ENCODE measurements at regions of chr6 and their contacts with region 1.

Region 1: DNA sequence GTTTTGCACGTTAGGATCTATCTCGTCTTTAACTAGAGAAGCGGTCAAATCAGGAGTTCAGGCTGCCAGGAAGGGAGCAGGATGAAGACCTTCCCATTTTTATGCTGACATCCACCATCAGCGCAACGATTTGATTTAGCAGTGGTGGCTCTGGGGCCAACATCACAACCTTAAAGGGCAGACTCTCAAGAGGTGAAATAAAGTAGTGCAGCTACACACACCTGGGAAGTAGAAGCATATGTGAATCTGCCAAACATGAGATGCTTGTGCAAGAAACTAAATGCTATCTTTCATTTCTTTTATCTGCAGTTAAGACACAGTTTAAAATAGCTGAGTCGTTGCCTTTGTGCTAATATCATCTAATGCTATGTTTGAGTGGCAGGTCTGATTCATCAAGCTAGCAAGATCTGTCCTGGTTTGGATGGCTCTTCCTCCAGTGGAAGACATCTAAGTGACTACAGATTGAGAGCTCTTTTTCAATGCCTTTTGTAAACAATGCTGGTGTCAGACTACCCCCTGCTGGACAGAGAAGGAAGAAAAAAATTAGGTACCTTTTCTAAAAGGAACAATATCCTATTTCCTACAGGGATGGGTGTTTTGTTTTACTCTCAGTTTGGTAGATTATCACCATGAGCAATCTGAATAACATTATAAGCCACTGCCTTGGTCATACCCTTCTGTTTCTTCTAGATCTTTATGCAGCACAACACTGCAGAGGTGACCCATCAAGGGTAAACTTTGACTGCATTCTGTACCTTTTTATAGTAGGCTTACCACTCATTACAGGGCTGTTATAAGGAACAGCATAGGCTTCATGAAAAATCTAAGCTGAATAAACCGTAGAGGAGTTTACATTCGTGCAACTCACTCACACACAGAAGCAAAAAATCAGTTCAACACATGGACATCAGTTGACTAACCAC is 171.6 kb upstream of the FBXL4 start:
- DNase-seq: peak in 6 of 14 experiments; percentile 2 to 46 (median 20)
- ATAC-seq: no peak
- H3K4me3 ChIP-seq: no peak overlapping the region
- H3K4me3 Mint-ChIP-seq: no peak overlapping the region
- H3K27ac ChIP-seq: no peak overlapping the region
- H3K27ac Mint-ChIP-seq: no peak overlapping the region
- H3K4me1 ChIP-seq: no peaks in the 10 kb centered on the region
- H3K4me1 Mint-ChIP-seq: no peaks in the 10 kb centered on the region
- H3K27me3 ChIP-seq: peaks cover 0 to 4% of the 10 kb centered on the region in 2 experiments
- H3K27me3 Mint-ChIP-seq: peaks cover 54% of the 10 kb centered on the region
- CTCF ChIP-seq: peak; percentile 63

Region 2: GRCh38 chr6:97186416-97186999 is 1932.9 kb before region 1 on chr6:
- CTCF ChIA-PET with region 1: interaction called, 3 read pairs
- POLR2A ChIA-PET with region 1: no interaction called
- intact Hi-C with region 1: loop called (anchors 2 kb)
- DNase-seq: peak; percentile 36 to 77 (median 56)
- ATAC-seq: peak; percentile 77
- H3K4me3 ChIP-seq: no peak overlapping the region
- H3K4me3 Mint-ChIP-seq: no peak overlapping the region
- H3K27ac ChIP-seq: no peak overlapping the region
- H3K27ac Mint-ChIP-seq: no peak overlapping the region
- H3K4me1 ChIP-seq: no peaks in the 10 kb centered on the region
- H3K4me1 Mint-ChIP-seq: no peaks in the 10 kb centered on the region
- H3K27me3 ChIP-seq: no peaks in the 10 kb centered on the region
- H3K27me3 Mint-ChIP-seq: no peaks in the 10 kb centered on the region
- CTCF ChIP-seq: peak; percentile 97

Region 3: GRCh38 chr6:97497713-97498331 is 1621.5 kb before region 1 on chr6:
- CTCF ChIA-PET with region 1: interaction called, 8 read pairs
- POLR2A ChIA-PET with region 1: no interaction called
- intact Hi-C with region 1: loop called (anchors 1 to 2 kb)
- DNase-seq: peak; percentile 17 to 76 (median 40)
- ATAC-seq: peak; percentile 84
- H3K4me3 ChIP-seq: no peak overlapping the region
- H3K4me3 Mint-ChIP-seq: no peak overlapping the region
- H3K27ac ChIP-seq: no peak overlapping the region
- H3K27ac Mint-ChIP-seq: no peak overlapping the region
- H3K4me1 ChIP-seq: no peaks in the 10 kb centered on the region
- H3K4me1 Mint-ChIP-seq: no peaks in the 10 kb centered on the region
- H3K27me3 ChIP-seq: peaks cover 0 to 4% of the 10 kb centered on the region in 2 experiments
- H3K27me3 Mint-ChIP-seq: peaks cover 29% of the 10 kb centered on the region
- CTCF ChIP-seq: peak; percentile 81

Region 4: GRCh38 chr6:98769544-98769943 is 349.8 kb before region 1 on chr6:
- CTCF ChIA-PET with region 1: no interaction called
- POLR2A ChIA-PET with region 1: no interaction called
- intact Hi-C with region 1: loop called in 1 of 2 experiments (anchors 10 kb)
- DNase-seq: peak in 4 of 14 experiments; percentile 7 to 28 (median 8)
- ATAC-seq: no peak
- H3K4me3 ChIP-seq: no peak overlapping the region
- H3K4me3 Mint-ChIP-seq: no peak overlapping the region
- H3K27ac ChIP-seq: no peak overlapping the region
- H3K27ac Mint-ChIP-seq: no peak overlapping the region
- H3K4me1 ChIP-seq: no peaks in the 10 kb centered on the region
- H3K4me1 Mint-ChIP-seq: peaks cover 1% of the 10 kb centered on the region
- H3K27me3 ChIP-seq: no peaks in the 10 kb centered on the region
- H3K27me3 Mint-ChIP-seq: peaks cover 42% of the 10 kb centered on the region
- CTCF ChIP-seq: no peak

Region 5: DNA sequence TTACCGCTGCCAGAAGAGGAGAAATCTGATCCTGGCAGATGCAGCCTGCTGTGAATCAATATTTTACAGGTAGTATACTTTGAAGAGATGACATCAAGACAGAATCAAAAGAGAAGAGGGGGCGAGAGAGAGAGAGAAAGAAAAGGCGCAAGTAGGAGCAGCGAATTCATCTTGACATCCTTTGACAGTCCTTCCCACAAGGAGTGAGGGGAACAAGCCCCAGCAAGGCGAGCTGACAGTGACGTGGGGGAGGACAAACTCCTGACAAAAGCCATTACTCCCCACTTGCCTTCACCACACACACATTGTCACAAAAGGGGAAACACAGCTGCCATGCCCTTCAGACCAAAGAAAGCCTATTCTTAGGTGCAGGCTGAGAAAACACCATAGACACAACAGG is 25.6 kb before region 1 on chr6:
- CTCF ChIA-PET with region 1: no interaction called
- POLR2A ChIA-PET with region 1: no interaction called
- intact Hi-C with region 1: no loop called
- DNase-seq: no peak
- ATAC-seq: no peak
- H3K4me3 ChIP-seq: no peak overlapping the region
- H3K4me3 Mint-ChIP-seq: no peak overlapping the region
- H3K27ac ChIP-seq: no peak overlapping the region
- H3K27ac Mint-ChIP-seq: no peak overlapping the region
- H3K4me1 ChIP-seq: no peaks in the 10 kb centered on the region
- H3K4me1 Mint-ChIP-seq: no peaks in the 10 kb centered on the region
- H3K27me3 ChIP-seq: peaks cover 0 to 12% of the 10 kb centered on the region in 2 experiments
- H3K27me3 Mint-ChIP-seq: peaks cover 50% of the 10 kb centered on the region
- CTCF ChIP-seq: no peak

Measured in CD4-positive, alpha-beta T cell (primary cell).